ENCODE measurements at regions of chr18 and their contacts with region 1.

Region 1: DNA sequence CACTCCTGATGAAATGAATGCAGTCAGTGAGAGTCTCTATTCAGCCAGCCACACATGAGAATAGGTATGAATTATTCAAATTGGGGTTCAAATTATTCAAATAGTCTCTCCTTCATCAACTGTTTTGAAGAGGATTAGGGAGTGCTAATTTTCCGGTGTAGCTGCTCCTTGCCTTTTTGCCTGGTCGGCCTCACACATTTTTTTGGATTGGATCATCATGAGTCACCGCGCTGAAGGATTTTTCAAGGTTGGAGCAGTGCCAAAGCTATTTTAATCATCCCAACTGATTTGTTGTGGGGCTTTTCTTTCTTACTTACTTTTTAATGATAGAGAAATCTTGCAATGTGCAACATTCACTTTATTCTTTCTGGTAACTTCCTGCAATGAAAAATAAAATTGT is 2.4 kb upstream of the DTNA start:
- DNase-seq: no peak

Region 2: GRCh38 chr18:33916200-33916599 is 791.5 kb before region 1 on chr18:
- intact Hi-C with region 1: no loop called
- DNase-seq: no peak

Region 3: DNA sequence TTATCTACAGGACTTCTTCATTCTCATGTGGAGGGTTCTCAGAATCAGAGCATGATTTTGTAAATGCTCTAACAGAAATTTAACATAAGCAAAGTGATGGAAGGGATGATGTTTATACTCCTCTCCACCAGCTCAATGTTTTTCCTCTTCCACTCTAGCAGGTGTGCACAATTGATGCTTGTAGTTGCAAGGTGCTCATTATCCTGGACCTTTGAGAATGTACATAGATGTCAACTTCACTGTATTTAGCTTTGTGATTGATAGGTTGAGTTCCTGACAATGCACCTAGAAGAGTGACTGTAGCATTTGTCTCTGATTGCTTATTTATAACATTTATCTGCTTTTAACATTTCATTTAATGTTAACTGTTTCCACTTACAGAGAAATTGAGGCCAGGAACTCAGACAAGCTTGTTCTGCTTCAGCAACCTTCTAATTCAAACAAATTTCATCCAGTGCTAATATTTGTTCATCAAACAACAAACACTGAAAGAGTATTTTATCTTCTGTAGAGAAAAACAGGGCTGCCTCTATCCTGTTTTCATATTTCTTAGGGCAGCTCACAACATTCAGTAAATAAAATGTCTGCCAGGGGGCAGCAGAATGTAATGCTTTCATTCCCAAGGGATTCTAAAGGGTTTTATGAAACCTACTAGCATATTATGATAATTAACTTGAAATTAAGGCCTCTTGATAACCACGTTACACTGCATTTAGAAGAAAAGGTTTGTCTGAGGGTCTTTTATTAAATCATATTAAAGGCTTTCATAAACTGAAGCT is 355.1 kb before region 1 on chr18:
- intact Hi-C with region 1: loop called (anchors 5 kb)
- DNase-seq: no peak

Measured in cardiac septum (tissue), 1 donor.